ENCODE measurements at regions of chr10 and their contacts with region 1.

Region 1: GRCh38 chr10:86936661-86937501 is 20.5 kb downstream of the MMRN2 start:
- DNase-seq: no peak

Region 2: GRCh38 chr10:86846088-86846487 is 90.8 kb before region 1 on chr10:
- CTCF ChIA-PET with region 1: no interaction called
- POLR2A ChIA-PET with region 1: no interaction called
- DNase-seq: no peak

Region 3: DNA sequence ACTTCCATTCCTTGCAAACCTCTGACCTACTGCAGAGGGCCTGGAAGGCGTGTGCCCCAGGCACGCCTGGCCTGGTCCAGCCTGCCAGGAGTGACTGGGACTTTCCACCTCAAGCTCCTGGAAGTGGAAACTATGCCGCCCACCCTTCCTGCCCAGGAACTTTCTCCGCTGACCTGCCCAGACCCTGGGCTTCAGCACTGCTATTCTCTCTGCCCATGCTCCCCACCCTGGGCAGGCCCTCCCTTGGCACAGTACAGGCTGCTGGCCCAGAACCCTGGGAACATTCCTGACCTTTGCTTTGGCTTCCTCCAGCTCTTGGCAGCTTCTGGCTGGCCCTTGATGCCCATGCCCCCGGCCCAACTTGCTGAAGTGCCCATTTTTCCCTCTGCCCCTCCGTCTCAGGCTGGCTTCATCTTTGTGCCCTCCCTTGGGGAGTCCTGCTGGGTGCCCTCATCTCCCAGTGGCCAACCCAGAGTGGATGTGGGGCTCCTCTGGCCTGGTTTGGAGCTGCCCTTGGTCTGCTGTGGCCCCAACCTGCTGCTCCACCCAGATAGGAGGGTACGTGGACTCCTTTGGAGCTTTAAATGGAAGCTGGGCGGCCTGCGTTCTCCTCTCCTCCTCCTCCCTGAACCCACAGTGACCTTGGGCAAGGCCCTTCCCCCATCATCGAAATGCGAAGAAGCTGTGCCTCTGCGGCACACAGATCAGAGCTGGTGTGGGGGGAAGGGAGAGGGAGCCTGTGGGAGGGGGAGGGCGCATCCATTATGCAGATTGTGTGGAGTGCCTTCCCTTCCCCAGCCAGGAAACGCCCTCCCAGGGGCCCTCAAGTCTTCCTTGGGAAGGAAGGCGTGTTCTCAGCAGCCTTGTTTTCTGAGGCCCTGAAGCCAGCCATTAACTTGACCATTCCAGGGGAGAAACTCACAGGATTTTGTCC is 17.1 kb after region 1 on chr10:
- CTCF ChIA-PET with region 1: interaction called, 10 read pairs
- POLR2A ChIA-PET with region 1: no interaction called
- DNase-seq: peak; percentile 46

Measured in HEK293T (cell line).